Posterior cingulate gyrus (tissue), 11 donors: ENCODE measurements at regions of chr19 and their contacts with region 1.

Region 1: DNA sequence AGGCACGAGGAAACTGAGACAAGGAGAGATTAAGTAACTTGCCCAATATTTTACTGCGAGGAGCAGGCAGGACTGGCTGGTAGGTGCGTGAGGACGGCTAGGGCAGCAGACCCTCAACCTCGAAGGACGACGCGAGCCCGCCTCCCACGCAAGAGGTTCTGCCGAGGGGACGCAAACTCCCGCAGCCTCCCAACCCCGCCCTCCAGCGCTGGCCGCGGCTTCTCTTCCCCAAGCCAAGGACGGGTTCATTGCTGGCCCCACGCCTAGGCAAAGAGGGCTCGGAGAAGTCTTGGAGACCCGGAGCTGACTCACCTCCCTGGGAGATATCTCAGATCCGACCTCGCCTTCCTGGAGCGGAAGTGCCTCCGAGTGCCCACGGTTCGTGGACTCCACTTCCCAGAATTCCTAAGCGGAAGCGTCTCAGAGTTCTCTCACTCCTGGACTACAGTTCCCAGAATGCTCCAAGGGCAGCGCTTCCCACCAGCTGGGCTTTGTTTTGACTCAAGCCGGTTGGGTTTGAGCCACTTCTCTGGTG is at the start of gene ZNF235:
- DNase-seq: peak; percentile 82 to 98 (median 89)

Region 2: GRCh38 chr19:44212250-44212865 is 92.4 kb before region 1 on chr19 and contains the start of gene ZNF227:
- intact Hi-C with region 1: loop called (anchors 10 kb)
- DNase-seq: peak; percentile 80 to 98 (median 90)

Region 3: GRCh38 chr19:44228318-44228717 is 76.4 kb before region 1 on chr19:
- intact Hi-C with region 1: no loop called
- DNase-seq: no peak

Region 4: GRCh38 chr19:44345959-44346358 is 41.2 kb after region 1 on chr19:
- intact Hi-C with region 1: no loop called
- DNase-seq: peak in 2 of 10 donors; percentile 9 to 20

Region 5: GRCh38 chr19:44356383-44357111 is 51.8 kb after region 1 on chr19 and contains the start of gene ZNF112:
- intact Hi-C with region 1: loop called (anchors 2 kb)
- DNase-seq: peak; percentile 84 to 98 (median 90)

Region 6: GRCh38 chr19:44500148-44500956 is 195.6 kb after region 1 on chr19 and contains the start of gene ZNF180:
- intact Hi-C with region 1: loop called (anchors 2 kb)
- DNase-seq: peak; percentile 90 to 99 (median 96)